Activated naive CD8-positive, alpha-beta T cell treated with anti-CD3 and anti-CD28 coated beads, Interleukin-2, amount 10 ng/mL, durations not matched to agents 7 days and 5 days (primary cell): ENCODE measurements at regions of chr10 and their contacts with region 1.

Region 1: DNA sequence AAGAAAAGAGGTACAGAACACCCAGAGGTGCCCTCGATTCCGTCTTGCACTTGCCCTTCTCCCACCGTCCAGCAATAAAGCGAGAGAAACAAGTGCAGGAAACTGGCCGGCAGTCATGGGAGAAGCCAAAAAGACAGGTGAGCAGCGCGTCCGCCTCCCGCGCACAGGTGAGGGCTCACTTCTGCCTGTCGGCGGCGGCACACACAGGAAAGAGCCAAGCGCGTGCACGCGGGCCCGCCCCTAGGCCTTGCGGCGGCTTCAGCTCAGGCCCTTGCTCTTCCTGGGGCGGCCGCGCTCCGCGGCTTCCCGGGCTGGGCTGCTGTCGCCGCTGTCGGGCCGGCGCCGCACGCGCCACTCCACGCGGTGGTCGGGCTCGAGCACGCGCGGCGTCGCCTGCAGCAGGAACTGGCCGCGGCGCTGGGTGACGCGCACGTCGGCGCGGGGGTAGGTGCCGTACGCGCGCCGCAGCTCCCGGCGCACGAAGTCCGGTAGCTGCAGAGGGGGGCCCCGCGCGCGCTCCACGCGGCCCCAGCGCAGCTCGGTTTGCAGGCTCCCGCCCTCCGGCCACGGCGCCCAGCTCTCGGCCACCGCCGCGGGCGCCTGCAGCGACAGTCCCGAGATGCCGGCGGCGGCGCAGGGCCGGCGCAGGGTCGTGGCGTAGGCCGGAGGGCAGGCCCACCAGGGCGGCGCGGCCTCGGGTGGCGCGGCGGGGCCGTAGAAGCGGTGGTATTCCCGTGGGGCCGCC is 977 bp downstream of the C10orf95 start:
- DNase-seq: peak; percentile 95
- ATAC-seq: peak; percentile 83
- H3K4me3 Mint-ChIP-seq: peak overlapping the region; percentile 94
- H3K27ac Mint-ChIP-seq: peak overlapping the region; percentile 93
- H3K4me1 Mint-ChIP-seq: peaks cover 31% of the 10 kb centered on the region
- H3K27me3 Mint-ChIP-seq: no peaks in the 10 kb centered on the region

Region 2: DNA sequence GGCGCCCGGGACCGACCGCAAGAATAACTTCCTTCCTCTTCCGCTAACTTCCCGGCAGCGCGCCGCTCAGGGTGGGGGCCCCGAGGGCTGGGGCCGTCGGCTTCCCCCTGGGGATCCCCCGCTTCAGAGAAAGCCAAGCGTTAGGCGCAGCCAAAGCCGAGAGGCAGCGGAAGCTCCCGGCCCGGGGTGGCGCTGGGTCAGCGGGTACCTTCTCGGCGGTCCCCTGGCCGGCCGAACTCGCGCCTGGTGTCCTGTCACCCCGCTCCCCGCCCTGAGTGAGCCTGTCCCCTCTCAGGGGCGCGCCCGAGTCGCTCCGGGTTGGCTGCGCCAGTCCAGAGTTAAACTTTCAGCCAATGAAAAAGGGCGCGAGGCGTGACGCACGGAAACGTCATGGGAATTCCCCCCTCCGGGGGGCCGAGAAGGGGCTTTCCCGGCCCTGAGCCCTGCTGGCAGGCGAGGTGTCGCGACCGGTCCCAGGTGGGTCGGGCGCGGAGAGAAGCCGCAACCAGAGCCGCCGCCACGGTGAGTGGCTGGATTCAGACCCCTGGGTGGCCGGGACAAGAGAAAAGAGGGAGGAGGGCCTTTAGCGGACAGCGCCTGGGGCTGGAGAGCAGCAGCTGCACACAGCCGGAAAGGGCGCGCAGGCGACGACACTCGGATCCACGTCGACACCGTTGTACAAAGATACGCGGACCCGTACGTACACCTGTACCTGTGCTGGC is 56.1 kb before region 1 on chr10:
- POLR2A ChIA-PET with region 1: interaction called, 14 read pairs
- DNase-seq: peak; percentile 97
- ATAC-seq: peak; percentile 90
- H3K4me3 Mint-ChIP-seq: peak overlapping the region; percentile 90
- H3K27ac Mint-ChIP-seq: peak overlapping the region; percentile 96
- H3K4me1 Mint-ChIP-seq: peaks cover 20% of the 10 kb centered on the region
- H3K27me3 Mint-ChIP-seq: peaks cover 3% of the 10 kb centered on the region

Region 3: DNA sequence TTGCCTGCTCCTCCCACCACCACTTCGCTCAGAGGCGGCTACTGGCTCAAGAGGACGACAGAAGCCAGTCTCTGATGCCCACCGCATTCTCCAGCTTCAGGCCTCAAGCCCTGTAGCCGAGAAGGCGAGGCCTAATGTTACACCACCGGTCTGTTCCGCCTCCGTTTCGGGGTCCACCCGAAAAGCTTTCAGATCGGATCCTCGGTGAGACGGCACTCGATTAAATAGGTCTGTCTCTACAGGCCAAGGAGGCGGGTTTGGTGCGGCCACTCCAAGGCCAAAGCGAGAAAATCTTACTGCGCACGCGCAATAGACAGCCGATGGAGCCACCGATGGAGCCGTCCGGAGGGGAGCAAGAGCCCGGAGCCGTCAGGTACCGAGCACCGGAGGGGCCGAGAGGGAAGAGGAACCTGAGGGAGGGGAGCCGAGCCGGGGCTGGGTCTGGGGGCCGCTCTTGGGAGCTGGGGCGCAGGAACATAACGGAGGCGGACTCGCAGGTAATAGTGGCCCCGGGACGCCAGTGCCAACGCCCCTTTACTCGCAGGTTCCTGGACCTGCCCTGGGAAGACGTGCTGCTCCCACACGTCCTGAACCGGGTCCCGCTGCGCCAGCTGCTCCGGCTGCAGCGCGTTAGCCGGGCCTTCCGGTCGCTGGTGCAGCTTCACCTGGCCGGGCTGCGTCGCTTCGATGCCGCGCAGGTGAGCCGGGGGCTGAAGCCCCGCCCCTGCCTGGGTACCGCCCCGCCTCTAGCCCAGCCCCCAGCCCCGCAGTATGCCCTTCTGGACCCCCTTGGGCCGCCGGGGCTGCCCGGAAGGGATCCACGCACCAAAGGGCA is 29.3 kb before region 1 on chr10 and contains the start of gene FBXL15:
- POLR2A ChIA-PET with region 1: interaction called, 54 read pairs
- DNase-seq: peak; percentile 95
- ATAC-seq: peak; percentile 75
- H3K4me3 Mint-ChIP-seq: peak within 1 kb of the TSS; percentile 93
- H3K27ac Mint-ChIP-seq: peak within 1 kb of the TSS; percentile 91
- H3K4me1 Mint-ChIP-seq: peaks cover 26% of the 10 kb centered on the region
- H3K27me3 Mint-ChIP-seq: peaks cover 22% of the 10 kb centered on the region
- total RNA-seq, gene FBXL15: 11.7 to 16.3 TPM

Region 4: DNA sequence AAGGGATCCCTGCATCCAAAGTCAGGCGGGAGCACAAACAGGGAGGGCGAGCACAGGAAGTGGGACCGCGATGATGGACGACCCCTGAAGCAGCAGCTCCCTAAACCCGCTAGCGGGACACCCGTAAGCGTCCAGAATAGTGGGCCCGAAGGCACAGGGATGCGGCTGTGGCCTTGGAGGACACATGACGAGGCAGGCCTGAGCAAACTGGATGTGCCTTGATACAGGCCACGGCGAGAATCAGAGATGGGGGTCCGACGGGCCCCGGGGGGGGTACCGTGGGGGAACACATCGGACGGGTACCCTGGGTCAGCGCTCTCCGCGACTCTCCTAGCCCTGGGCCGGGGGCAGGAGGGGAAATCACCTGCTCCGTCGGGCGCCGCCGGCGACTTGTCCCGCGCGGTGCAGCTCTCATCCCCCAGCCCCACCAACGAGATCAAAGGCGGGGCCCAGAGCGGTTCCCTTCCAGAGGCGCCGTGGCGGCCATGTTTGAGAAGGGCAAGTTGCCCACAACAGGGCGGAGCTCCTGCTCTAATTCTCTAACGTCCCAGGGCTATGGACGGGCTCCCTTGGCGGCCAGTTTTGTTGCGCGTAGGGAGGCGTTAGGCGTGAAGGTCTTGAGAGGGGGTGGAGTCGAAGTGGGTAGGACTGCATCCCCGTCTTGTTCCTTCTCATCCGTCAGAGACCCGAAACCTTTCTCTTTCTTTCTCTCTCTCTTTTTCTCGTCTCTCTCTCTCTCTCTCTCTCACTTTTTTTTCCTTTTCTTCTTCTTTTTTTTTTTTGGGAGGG is 18.0 kb before region 1 on chr10 and contains the start of gene CUEDC2:
- POLR2A ChIA-PET with region 1: interaction called, 163 read pairs
- DNase-seq: peak; percentile 98
- ATAC-seq: peak; percentile 92
- H3K4me3 Mint-ChIP-seq: peak within 1 kb of the TSS; percentile 87
- H3K27ac Mint-ChIP-seq: peak within 1 kb of the TSS; percentile 94
- H3K4me1 Mint-ChIP-seq: peaks cover 36% of the 10 kb centered on the region
- H3K27me3 Mint-ChIP-seq: no peaks in the 10 kb centered on the region
- total RNA-seq, gene CUEDC2: 68.6 to 70.3 TPM

Region 5: GRCh38 chr10:102438374-102438773 is 12.0 kb before region 1 on chr10:
- POLR2A ChIA-PET with region 1: interaction called, 163 read pairs
- DNase-seq: no peak
- ATAC-seq: no peak
- H3K4me3 Mint-ChIP-seq: peak overlapping the region; percentile 90
- H3K27ac Mint-ChIP-seq: no peak overlapping the region
- H3K4me1 Mint-ChIP-seq: peaks cover 43% of the 10 kb centered on the region
- H3K27me3 Mint-ChIP-seq: no peaks in the 10 kb centered on the region

Region 6: GRCh38 chr10:102461187-102462054 is 11.1 kb after region 1 on chr10:
- POLR2A ChIA-PET with region 1: interaction called, 62 read pairs
- DNase-seq: peak; percentile 94
- ATAC-seq: peak; percentile 98
- H3K4me3 Mint-ChIP-seq: peak overlapping the region; percentile 96
- H3K27ac Mint-ChIP-seq: peak overlapping the region; percentile 84
- H3K4me1 Mint-ChIP-seq: peaks cover 25% of the 10 kb centered on the region
- H3K27me3 Mint-ChIP-seq: no peaks in the 10 kb centered on the region

Region 7: DNA sequence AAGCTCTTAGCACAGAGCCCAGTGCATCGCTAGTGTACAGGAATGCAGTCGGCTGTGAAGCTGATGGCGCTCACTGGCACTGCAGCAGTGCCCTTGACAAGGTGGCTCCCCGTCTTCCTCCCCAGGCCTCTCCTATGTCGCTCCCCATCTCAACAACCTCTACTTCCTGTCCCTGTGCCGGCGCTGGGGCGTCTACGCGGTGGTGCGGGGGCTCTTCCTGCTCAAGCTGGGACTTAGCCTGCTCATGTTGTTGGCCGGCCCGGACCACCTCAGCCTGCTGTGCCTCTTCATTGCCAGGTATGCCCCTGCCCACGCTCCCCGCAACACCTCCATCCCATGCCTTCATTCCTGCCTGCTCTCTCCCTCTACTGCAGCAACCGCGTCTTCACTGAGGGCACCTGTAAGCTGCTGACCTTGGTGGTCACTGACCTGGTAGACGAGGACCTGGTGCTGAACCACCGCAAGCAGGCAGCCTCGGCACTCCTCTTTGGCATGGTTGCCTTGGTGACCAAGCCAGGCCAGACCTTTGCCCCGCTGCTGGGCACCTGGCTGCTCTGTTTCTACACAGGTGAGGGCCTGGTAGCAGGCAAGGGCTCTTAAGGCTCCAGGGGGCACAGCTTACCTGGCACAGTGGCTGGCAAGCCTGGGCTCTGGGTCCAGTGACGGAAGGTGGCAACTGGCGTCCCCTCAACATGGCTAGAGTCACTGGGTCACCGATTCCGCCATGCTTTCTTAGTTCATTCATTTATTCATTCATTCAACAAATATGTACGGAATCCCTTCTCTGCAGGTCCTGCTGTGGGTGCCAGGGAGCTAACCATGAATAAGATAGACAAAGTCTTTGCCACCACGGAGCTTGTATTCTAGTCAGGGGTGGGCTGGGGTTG is 23.3 kb after region 1 on chr10:
- POLR2A ChIA-PET with region 1: interaction called, 14 read pairs
- DNase-seq: peak; percentile 56
- ATAC-seq: peak; percentile 87
- H3K4me3 Mint-ChIP-seq: peak overlapping the region; percentile 54
- H3K27ac Mint-ChIP-seq: peak overlapping the region; percentile 88
- H3K4me1 Mint-ChIP-seq: peaks cover 23% of the 10 kb centered on the region
- H3K27me3 Mint-ChIP-seq: no peaks in the 10 kb centered on the region